ENCODE measurements at regions of chr1 and their contacts with region 1.

Region 1: GRCh38 chr1:171841050-171841940 is at the start of gene DNM3:
- DNase-seq: peak; percentile 83 to 99 (median 90)

Region 2: DNA sequence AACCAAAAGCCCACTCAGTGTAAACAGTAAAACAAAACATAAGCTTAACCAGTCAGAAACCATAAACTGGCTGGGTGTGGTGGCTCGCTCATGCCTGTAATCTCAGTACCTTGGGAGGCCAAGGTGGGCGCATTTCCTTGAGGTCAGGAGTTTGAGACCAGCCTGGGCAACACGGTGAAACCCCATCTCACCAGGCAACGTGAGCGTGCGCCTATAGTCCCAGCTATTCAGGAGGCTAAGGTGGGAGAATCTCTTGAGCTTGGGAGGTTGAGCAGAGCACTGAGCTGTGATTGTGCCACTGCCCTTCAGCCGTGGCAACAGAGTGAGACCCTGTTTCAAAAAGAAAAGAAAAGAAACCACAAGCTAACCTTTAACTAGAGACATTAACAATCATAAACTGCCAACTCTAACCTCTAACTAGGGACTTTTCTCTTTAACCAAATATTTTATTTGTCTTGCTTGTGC is 369.1 kb before region 1 on chr1:
- intact Hi-C with region 1: no loop called
- DNase-seq: no peak

Region 3: DNA sequence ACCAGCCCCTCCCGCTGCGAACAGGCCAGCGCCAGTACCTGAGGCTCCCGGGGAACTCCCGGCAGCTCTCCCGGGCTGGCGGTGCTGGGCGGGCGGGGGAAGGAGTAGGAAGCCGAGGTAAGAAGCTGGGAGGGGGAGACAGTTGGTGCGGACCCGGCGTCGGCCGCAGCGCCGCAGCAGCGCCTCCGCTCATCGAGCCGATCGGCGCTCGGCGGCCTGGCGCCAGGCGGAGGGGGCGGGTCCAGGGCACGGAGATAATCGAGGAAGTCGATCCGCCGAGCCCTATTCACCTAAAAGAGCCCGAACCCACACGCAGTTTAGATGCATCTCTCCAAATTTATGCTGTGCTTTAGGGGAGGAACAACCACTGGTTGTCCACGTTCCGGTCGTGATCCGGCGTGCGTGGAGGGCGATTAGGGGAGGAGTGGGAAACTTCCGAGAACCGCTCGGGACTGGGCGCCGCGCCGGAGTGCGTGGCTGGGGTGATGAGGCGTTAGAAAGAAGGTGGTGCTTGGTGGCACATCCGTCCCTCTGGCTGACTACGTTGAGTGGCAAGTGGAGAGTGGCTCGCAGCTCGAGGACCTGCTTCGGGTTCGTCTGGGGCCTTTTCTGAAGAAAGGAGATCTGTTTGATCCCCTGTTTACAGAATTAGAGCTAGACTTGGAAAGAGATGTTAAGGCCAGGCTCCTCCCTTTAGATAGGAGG is 99.3 kb before region 1 on chr1 and contains the start of gene VAMP4:
- intact Hi-C with region 1: loop called (anchors 10 kb)
- DNase-seq: peak; percentile 80 to 97 (median 86)

Region 4: DNA sequence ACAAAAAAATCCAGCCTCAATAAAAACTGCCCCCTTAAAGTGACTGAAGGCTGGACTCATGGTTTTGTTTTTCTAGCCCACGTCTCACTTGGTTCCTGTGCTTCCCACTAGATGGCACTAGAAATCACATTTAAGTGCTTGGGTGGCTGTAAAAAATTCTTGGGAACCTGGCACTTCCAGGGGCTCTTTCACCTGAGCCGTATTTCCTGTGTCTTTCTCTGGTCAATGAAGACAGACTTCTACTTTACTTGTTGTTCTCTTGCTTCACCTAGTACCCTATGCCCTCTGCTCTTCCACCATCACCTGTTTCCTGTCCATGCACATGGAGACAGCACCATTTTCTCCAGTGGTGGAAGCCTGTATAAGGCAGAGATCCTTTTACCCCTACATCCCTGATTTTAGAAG is 39.8 kb before region 1 on chr1:
- intact Hi-C with region 1: loop called (anchors 5 kb)
- DNase-seq: no peak

Region 5: GRCh38 chr1:171898941-171899340 is 57.6 kb after region 1 on chr1:
- intact Hi-C with region 1: loop called (anchors 2 kb)
- DNase-seq: peak; percentile 66 to 98 (median 78)

Region 6: GRCh38 chr1:171948511-171948910 is 107.2 kb after region 1 on chr1:
- intact Hi-C with region 1: no loop called
- DNase-seq: no peak

Region 7: GRCh38 chr1:171984850-171985485 is 143.7 kb after region 1 on chr1:
- intact Hi-C with region 1: loop called (anchors 2 kb)
- DNase-seq: no peak

Region 8: DNA sequence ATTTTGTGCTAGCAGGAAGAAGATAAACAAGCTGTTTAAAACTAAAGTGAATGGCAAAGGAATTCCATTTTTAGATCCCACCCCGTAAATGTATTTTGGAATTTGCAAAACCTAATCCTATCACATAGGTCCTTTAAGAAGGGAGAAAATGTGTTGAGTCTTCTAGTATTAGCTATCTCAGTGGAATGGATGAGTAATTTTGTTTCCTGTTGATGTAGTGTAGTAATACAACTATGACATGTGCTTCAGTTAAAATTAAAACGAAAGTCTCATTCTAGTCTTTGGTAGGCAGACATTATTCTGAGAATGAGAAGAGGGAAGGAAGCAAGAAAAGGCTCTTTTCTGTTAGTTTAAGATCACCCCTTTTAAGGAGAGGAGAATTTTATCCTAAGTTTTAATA is 313.3 kb after region 1 on chr1:
- intact Hi-C with region 1: no loop called
- DNase-seq: no peak

Measured in posterior cingulate gyrus (tissue), 11 donors.